Dendritic cell treated with granulocyte-macrophage colony-stimulating factor and Interleukin-4, amounts not matched to agents 40 ng/mL and 50 ng/mL, for 4 days (primary cell): ENCODE measurements at regions of chr2 and their contacts with region 1.

Region 1: GRCh38 chr2:232854082-232854481 is 16.0 kb upstream of the SNORC start:
- H3K4me3 Mint-ChIP-seq: no peak overlapping the region
- H3K27ac Mint-ChIP-seq: no peak overlapping the region
- H3K4me1 Mint-ChIP-seq: no peaks in the 10 kb centered on the region
- H3K27me3 Mint-ChIP-seq: no peaks in the 10 kb centered on the region

Region 2: DNA sequence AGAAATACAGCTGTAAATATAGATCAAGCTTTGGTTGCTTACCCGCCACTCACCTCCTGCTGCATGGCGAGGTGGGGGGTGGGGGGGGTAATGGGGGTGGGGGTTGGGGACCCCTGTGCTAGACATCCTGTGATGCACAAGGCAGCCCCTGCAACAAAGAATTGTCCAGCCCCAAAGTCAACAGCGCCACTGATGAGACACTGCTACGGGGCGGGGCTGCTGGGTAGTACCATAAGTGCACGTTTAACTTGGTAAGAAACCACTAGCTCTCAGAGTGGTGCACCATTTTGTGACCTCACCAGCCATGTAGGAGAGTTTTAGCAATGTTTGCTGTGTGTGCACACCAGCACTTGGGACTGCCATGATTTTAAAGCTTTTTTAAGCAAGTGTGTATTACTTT is 56.3 kb after region 1 on chr2:
- intact Hi-C with region 1: no loop called
- H3K4me3 Mint-ChIP-seq: no peak overlapping the region
- H3K27ac Mint-ChIP-seq: no peak overlapping the region
- H3K4me1 Mint-ChIP-seq: no peaks in the 10 kb centered on the region
- H3K27me3 Mint-ChIP-seq: peaks cover 33% of the 10 kb centered on the region

Region 3: DNA sequence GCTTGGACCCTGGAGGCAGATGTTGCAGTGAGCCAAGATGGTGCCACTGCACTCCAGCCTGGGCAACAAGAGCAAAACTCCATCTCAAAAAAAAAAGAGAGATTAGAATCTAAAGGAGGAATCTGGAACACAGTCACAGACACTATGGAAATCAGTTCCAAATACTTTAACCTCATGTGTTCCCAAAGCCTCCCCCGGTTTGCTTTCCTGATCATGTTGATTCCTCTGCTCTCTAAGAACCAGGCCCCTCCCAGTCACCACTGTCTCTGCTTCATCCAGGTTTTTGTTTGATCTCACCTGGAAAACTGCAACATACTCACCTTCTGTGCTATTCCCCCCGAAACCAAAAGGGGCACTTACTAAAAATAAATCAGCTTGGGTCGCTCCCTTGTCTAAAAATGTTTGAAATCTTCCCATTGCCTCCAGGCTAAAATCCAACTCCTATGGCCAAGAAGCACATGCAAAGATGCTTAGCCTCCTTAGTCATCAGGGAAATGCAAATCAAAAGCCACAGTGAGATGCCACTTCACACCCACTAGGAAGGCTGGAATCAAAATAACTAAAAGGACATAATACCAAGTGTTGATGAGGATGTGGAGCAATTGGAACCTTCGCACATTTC is 172.2 kb after region 1 on chr2:
- intact Hi-C with region 1: loop called (anchors 5 kb)
- H3K4me3 Mint-ChIP-seq: no peak overlapping the region
- H3K27ac Mint-ChIP-seq: no peak overlapping the region
- H3K4me1 Mint-ChIP-seq: no peaks in the 10 kb centered on the region
- H3K27me3 Mint-ChIP-seq: peaks cover 3% of the 10 kb centered on the region

Region 4: DNA sequence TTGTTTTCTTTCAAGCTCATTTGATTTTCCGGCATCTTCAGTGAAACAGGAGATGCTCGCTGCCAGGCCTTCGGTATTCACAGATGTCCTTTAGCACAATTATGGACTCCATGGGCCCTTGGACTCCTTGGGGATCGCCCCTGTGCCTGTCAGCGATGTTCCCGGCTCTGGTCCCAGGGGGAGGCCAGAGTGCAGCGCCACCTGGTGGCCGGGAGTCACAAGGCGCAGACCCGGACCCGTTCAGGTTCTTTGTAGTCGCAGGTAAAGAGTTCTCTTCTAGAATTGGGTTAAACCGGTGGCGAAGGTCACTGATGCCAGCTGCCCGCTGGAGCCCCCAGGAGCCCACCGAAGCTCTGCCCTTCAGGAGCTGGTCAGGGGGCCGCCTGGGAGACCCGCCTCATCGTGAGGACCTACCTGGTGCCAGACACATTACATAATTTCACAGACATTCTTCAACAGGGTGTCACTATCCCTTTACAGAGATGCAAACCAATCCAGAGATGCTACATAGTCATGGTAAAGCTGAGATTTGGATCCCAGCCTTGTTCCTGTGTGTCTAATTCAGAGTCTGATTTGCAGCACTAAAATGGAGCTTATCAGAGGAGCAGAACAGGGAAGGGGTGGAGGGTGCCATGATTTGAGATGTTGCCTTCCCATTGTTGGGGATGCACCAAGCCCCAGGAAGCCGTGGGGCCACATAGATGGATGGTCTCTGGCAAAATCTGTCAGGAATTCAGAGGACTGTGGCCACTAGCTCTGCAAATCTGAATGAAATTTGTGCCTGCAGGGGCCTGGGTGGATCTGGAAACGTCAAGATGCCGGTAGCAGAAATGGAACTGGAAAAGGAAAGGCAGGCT is 200.1 kb after region 1 on chr2:
- intact Hi-C with region 1: loop called (anchors 1 kb)
- H3K4me3 Mint-ChIP-seq: no peak overlapping the region
- H3K27ac Mint-ChIP-seq: no peak overlapping the region
- H3K4me1 Mint-ChIP-seq: peaks cover 41% of the 10 kb centered on the region
- H3K27me3 Mint-ChIP-seq: peaks cover 5% of the 10 kb centered on the region